A549 (cell line): ENCODE measurements at regions of chr11 and their contacts with region 1.

Region 1: GRCh38 chr11:57741132-57742086 is at the start of gene SELENOH:
- DNase-seq: peak; percentile 94 to 98
- ATAC-seq: peak; percentile 97 to 98
- H3K4me3 ChIP-seq: peak within 1 kb of the TSS; percentile 88
- H3K27ac ChIP-seq: peak within 1 kb of the TSS; percentile 90 to 95
- H3K4me1 ChIP-seq: peaks cover 14% of the 10 kb centered on the region
- CTCF ChIP-seq: no peak
- EP300 ChIP-seq: no peak
- POLR2A ChIP-seq: peak; percentile 53
- RAD21 ChIP-seq: peak in 1 of 2 experiments; percentile 18; a peak in 2 of 5 replicates
- polyA plus RNA-seq, gene SELENOH: 99.7 and 115 TPM in 2 replicates

Region 2: DNA sequence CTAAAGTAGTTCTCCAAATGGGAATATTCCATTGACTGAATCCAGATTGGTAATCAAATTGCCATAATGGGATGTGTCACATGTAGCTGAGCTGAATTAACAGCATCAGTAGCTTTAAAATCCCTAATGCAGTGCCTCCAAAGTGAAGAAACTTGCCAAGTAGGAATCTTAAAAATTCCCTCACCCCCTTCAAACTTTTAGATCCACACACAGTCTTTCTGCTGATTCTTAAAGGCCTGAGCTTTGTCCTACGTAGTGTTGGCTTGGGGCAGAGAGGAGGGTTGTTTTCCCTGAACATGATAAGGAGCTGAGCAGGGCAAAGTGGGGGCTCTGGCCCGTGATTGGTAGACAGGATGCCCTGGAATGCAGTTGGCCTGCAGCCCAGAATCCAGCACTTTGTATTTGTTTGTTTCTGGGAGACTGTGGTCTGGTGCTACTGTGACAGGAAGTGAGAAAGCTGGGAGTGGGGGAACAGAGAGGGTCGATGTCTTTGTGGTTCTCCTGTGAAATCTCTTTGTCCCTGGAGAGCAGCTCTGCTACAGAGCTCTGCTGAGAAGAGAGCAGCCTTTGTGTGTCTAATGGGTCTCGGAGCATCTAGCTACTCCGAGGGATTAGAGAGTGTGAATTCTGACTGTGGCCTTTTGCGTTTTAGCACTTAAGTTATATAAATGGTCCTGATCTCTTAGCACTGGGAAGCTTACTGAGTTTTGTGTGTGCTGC is 37.1 kb after region 1 on chr11:
- CTCF ChIA-PET with region 1: interaction called, 3 read pairs
- POLR2A ChIA-PET with region 1: interaction called, 21 read pairs
- DNase-seq: peak; percentile 88 to 94
- ATAC-seq: peak; percentile 95 to 96
- H3K4me3 ChIP-seq: peak overlapping the region; percentile 31
- H3K27ac ChIP-seq: peak overlapping the region; percentile 83 to 88
- H3K4me1 ChIP-seq: peaks cover 92% of the 10 kb centered on the region
- CTCF ChIP-seq: no peak
- EP300 ChIP-seq: no peak
- POLR2A ChIP-seq: no peak
- RAD21 ChIP-seq: no peak; a peak in 1 of 5 replicates

Region 3: DNA sequence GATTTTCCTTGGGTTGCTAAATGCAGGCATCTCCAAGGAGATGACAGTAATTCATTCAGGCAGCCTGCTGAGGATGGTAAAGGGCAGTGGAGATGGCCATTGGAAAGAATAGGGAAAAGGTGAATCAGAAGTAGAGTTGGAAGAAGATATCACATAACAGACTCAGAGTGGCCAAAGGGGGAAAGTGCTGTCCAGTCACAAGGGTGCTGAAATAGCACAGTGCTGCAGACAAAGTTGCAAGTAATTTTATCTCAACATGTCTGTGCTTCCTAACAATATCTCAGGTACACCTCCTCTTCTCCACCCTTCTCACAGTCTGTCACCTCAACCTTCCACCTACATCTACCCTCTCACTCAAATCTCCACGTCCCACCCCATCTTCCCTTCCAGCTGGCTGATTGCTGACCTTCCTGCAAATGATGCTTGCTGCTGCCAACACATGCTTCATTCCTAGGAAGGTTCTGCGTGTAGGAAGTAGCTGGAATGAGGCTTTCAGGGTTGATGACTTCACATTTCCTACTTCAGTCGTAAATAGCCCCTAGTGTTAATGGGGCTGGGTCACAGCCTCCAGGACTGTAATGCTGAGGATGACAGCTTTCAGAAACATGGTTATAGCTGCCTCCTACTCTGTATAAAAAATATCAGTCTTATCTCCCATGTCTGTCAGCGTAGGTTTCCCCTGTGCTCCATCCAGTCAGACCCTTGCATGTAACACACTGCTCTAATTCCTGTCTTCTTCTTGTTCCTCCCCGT is 144.1 kb after region 1 on chr11:
- CTCF ChIA-PET with region 1: no interaction called
- POLR2A ChIA-PET with region 1: no interaction called
- DNase-seq: peak in 1 of 2 experiments; percentile 31
- ATAC-seq: peak; percentile 40 to 59; a peak in 3 of 6 replicates
- H3K4me3 ChIP-seq: no peak overlapping the region
- H3K27ac ChIP-seq: no peak overlapping the region
- H3K4me1 ChIP-seq: no peaks in the 10 kb centered on the region
- CTCF ChIP-seq: no peak
- EP300 ChIP-seq: no peak
- POLR2A ChIP-seq: no peak
- RAD21 ChIP-seq: no peak